ENCODE measurements at regions of chr3 and their contacts with region 1.

Region 1: DNA sequence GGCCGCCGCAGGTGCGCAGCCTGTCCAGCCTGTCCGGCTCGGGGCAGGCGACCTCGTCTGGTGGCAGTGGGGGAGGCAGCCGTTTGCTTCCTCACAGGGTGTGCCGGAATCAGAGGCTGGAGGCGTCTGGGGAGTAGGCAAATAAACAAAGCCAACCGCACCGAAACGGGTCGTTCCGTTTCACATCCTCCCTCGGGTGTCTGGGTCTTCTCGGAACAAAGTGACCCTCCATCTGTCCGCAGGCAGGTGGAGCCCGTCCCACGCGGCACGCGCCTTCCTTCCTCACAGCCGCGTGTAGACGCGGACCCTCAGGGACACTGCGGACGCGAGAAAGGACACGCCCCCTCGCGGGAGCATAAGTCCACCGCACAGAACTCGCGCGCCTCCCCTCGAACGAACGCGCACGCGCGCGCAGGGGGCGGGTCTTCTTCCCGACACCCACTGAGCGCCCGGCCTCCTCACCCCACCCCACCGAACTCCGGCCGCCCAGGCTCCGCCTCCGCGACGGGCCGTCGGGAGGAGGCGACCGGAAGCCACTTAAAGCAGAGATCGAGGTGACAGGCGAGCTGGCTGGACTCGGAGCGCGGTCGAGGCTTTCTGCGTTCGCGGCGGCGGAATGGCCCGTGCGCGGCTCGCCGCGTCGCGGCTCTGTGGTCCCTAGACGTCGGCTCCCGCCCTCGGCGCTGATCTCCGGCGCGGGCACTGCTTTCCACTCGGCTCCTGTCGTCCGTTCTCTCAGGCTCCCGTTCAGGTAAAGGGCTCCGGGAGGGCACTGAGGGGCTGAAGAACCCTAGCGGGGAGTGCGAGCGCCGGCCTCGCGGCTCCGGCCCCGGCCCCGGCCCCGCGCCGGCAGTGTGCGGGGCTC is at the start of gene TIPARP:
- DNase-seq: peak; percentile 97 to 100 (median 98)

Region 2: GRCh38 chr3:156554842-156555687 is 119.2 kb before region 1 on chr3 and contains the start of gene SSR3:
- intact Hi-C with region 1: loop called (anchors 2 kb)
- DNase-seq: peak; percentile 98 to 100 (median 99)

Region 3: GRCh38 chr3:156751461-156752025 is 77.3 kb after region 1 on chr3:
- intact Hi-C with region 1: no loop called
- DNase-seq: peak in 1 of 10 donors; percentile 16

Region 4: DNA sequence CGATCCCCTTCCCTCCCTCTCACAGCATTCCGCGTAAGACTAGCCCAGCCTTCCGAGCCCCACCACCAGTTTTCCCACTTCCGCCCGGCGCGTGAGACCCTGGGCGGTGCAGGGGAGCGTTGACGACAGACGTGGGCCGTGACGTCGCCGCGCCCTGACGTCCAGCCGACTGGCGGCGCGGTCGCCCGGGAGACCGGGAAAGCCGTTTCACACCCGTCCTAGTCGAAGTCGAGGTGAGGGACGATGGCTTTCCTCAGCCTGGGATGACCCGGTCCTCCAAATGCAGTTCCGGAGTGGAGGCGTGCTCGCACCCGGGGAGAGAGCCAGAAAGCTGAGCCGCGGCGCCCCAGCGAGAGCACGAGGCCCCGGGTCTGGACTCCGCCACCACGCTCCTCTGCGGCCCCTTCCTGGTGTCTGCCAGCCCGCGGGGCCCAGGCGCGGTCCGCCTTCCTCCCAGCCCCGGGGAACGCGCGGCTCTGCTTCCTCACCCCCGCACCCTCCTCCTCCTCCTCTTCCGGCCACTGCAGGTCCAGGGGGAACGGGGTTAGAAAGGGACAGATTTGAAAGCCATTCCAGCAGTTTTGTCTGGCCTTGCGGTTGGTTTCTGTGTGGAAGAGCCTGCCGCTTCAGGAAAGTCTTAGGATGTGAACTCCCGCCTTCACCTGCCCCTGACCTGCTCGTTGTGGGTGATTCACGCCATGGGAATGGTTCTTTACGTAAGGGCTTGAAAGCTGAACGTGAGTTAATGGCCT is 152.0 kb after region 1 on chr3 and contains the start of gene LEKR1:
- intact Hi-C with region 1: loop called (anchors 5 kb)
- DNase-seq: peak; percentile 65 to 97 (median 82)

Region 5: GRCh38 chr3:157081681-157082210 is 407.5 kb after region 1 on chr3:
- intact Hi-C with region 1: loop called (anchors 2 kb)
- DNase-seq: peak; percentile 82 to 98 (median 94)

Region 6: GRCh38 chr3:157136647-157137387 is 462.5 kb after region 1 on chr3:
- intact Hi-C with region 1: loop called (anchors 1 kb)
- DNase-seq: peak in 2 of 10 donors; percentile 22 to 82